Activated CD4-positive, alpha-beta memory T cell treated with anti-CD3 and anti-CD28 coated beads, Interleukin-2, amount 10 ng/mL, durations not matched to agents 7 days and 5 days (primary cell): ENCODE measurements at regions of chr12 and their contacts with region 1.

Region 1: DNA sequence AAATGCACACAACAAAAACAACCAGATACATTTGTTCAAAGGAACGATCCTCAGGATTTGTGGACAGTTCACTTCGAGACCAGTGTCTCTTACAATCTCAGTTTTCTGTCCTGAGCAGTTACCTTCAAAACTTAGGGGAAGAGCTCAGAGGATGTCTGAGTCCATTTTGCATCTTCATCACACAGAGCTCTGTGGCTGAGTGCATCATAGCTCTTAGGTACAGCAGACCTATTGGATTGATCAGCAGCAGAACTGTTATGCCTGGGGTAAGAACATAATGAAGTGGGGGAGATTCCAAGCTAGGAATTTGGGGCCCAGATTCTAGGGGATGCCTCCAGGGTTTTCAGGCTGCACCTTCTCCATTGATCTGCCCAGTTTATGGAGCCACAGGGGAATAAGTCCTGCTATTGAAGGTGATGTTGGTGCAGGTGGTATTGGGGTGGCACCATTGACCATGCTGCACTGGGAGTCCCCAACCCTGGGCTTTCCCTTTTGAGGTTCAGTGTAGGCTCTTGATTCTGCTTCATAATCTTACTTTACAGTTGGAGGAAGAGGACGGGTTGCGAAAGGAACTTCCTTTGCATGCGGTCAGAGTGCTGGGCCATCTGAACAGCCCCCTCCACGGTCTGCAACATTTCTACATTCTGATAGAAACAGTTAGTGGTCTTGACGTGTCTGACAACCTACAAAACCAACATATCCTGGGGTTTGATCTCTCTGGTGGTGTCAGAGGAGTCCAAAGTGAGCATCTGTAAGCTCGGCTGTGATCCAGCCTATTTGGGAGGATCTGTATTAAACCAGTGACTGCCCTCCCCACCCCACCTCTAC is 112.8 kb downstream of the CHST11 start:
- DNase-seq: peak; percentile 72
- H3K4me3 Mint-ChIP-seq: peak overlapping the region; percentile 32
- H3K27ac Mint-ChIP-seq: peak overlapping the region; percentile 87
- H3K4me1 Mint-ChIP-seq: peaks cover 72% of the 10 kb centered on the region
- H3K27me3 Mint-ChIP-seq: no peaks in the 10 kb centered on the region

Region 2: DNA sequence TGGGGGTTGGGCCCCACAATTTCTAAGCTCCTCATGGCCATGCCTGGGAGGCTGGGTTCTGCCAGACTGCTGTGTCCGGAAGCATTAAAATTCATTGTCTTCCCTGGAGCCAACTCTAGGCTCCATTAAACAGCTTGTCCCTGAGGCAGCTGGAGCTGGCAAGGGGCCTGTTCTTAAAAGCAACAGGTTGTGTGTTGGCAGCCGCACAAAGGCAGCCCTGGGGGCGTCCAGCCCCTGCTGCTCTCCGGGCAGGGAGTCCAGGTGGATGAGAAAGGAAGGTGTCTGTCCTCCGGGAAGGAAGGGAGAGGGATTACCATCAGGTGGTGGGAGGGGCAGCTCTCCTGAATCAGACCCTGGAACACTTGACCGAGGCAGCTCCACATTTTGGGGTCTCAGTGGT is 13.9 kb before region 1 on chr12:
- CTCF ChIA-PET with region 1: interaction called, 4 read pairs
- POLR2A ChIA-PET with region 1: interaction called, 11 read pairs
- DNase-seq: no peak
- H3K4me3 Mint-ChIP-seq: no peak overlapping the region
- H3K27ac Mint-ChIP-seq: no peak overlapping the region
- H3K4me1 Mint-ChIP-seq: peaks cover 42% of the 10 kb centered on the region
- H3K27me3 Mint-ChIP-seq: no peaks in the 10 kb centered on the region

Region 3: GRCh38 chr12:104604070-104604994 is 34.8 kb after region 1 on chr12:
- CTCF ChIA-PET with region 1: no interaction called
- POLR2A ChIA-PET with region 1: interaction called, 12 read pairs
- DNase-seq: peak; percentile 71
- H3K4me3 Mint-ChIP-seq: peak overlapping the region; percentile 34
- H3K27ac Mint-ChIP-seq: peak overlapping the region; percentile 95
- H3K4me1 Mint-ChIP-seq: peaks cover 69% of the 10 kb centered on the region
- H3K27me3 Mint-ChIP-seq: no peaks in the 10 kb centered on the region